Caco-2 (cell line): ENCODE measurements at regions of chr2 and their contacts with region 1.

Region 1: GRCh38 chr2:205041472-205042130 is 496.3 kb downstream of the PARD3B start:
- DNase-seq: no peak
- H3K4me3 ChIP-seq: no peak overlapping the region
- H3K4me3 Mint-ChIP-seq: no peak overlapping the region
- H3K27ac Mint-ChIP-seq: peak overlapping the region; percentile 39
- H3K4me1 ChIP-seq: peaks cover 7% of the 10 kb centered on the region; the same call in 1 of the 2 replicates
- H3K4me1 Mint-ChIP-seq: peaks cover 21% of the 10 kb centered on the region
- H3K27me3 ChIP-seq: no peaks in the 10 kb centered on the region
- H3K27me3 Mint-ChIP-seq: no peaks in the 10 kb centered on the region
- CTCF ChIP-seq: no peak

Region 2: GRCh38 chr2:205001300-205001966 is 40.2 kb before region 1 on chr2:
- CTCF ChIA-PET with region 1: no interaction called
- POLR2A ChIA-PET with region 1: no interaction called
- intact Hi-C with region 1: loop called (anchors 2 kb)
- DNase-seq: no peak
- H3K4me3 ChIP-seq: no peak overlapping the region
- H3K4me3 Mint-ChIP-seq: no peak overlapping the region
- H3K27ac Mint-ChIP-seq: no peak overlapping the region
- H3K4me1 ChIP-seq: peaks cover 4% of the 10 kb centered on the region; the same call in 1 of the 2 replicates
- H3K4me1 Mint-ChIP-seq: no peaks in the 10 kb centered on the region
- H3K27me3 ChIP-seq: no peaks in the 10 kb centered on the region
- H3K27me3 Mint-ChIP-seq: no peaks in the 10 kb centered on the region
- CTCF ChIP-seq: no peak